ENCODE measurements at regions of chr1 and their contacts with region 1.

Region 1: DNA sequence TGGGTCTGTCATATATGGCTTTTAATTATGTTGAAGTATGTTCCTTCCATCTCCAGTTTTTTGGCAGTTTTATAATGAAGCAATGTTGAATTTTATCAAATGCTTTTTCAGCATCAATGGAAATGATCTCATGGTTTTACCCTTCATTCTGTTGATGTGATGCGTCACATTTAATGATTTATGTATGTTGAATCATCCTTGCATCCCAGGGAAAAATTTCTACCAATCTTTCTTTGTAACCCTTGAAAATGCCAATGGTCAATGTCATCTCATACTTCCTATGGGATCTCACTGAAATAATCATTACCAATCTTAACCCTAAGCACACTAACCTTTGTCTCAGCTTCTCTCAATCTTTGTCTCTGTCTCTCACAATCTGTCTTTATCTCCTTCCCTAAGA is 1004.0 kb downstream of the KCNT2 start:
- DNase-seq: no peak
- H3K4me3 ChIP-seq: no peak overlapping the region
- H3K27ac ChIP-seq: no peak overlapping the region
- H3K4me1 ChIP-seq: no peaks in the 10 kb centered on the region
- H3K27me3 ChIP-seq: no peaks in the 10 kb centered on the region
- CTCF ChIP-seq: no peak
- POLR2A ChIP-seq: no peak

Region 2: GRCh38 chr1:195458365-195458764 is 145.9 kb before region 1 on chr1:
- intact Hi-C with region 1: no loop called
- DNase-seq: no peak
- H3K4me3 ChIP-seq: no peak overlapping the region
- H3K27ac ChIP-seq: no peak overlapping the region
- H3K4me1 ChIP-seq: no peaks in the 10 kb centered on the region
- H3K27me3 ChIP-seq: no peaks in the 10 kb centered on the region
- CTCF ChIP-seq: no peak
- POLR2A ChIP-seq: no peak

Region 3: DNA sequence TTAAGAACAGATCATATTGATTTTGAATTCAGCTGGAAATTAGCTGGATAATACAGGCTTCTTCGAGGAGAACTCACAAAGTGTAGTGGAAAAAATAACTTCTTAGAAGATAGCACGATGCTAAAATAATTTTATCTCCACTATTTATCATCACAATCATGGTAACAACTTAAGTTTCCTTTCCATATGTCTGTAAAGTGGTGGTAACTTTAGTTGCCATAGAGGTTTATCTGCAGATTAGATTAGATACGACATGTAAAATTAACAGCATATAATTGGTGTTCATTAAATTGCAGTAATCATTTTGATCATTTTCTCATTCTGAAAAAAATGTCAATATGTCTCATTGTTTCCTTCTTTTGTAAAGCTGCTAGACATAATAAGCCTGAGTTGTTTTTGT is 82.5 kb after region 1 on chr1:
- intact Hi-C with region 1: loop called (anchors 5 kb)
- DNase-seq: no peak
- H3K4me3 ChIP-seq: no peak overlapping the region
- H3K27ac ChIP-seq: no peak overlapping the region
- H3K4me1 ChIP-seq: no peaks in the 10 kb centered on the region
- H3K27me3 ChIP-seq: no peaks in the 10 kb centered on the region
- CTCF ChIP-seq: no peak
- POLR2A ChIP-seq: no peak